MCF 10A (cell line): ENCODE measurements at regions of chr12 and their contacts with region 1.

Region 1: DNA sequence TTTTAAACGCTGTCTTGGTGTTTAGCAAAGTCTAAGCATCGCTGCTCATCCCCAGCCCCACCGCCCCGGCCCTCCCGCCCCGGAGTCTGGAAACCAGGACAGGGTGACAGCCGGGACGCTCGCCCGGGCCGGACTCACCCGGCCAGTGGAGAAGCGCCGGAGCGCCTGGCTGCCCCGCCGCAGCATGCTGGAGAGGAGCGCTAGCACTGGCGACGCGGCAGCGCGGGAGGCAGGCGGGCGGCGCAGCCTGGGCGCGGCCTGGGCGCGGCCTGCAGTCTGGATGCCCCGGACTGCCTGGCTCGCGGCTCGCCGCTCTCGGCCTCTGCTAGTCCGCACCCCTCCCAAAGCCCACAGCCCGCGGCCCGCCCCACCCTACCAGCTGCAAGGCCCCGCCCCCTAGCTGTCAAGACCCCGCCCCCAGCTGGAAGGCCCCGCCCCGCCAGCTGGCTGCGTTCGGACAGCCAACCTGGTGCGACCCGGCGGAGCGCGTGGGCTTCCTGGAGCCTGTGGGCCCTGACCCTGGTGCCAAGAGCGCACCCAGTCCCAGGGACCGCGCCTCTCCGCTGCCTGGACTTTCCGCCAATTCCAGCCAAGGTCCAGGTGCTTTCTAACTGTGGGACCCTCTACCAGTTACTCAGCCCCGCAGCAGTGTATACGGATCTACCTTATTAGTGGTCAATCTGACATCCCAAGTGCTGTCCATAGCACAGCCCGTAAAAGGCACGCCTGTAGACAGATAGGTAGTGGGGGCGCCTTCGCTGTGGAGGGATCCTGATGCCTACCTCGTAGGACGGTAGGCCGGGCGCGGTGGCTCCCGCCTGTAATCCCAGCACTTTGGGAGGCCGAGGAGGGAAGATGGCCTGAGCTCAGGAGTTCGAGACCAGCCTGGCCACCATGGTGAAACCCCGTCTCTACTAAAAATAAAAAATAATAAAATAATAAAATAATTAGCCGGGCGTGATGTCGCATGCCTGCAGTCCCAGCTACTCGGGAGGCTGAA is at the start of gene ALDH1L2:
- DNase-seq: peak; percentile 85
- H3K4me3 Mint-ChIP-seq: peak within 1 kb of the TSS; percentile 92
- H3K27ac Mint-ChIP-seq: peak within 1 kb of the TSS; percentile 97
- H3K4me1 Mint-ChIP-seq: peaks cover 23% of the 10 kb centered on the region
- H3K27me3 Mint-ChIP-seq: no peaks in the 10 kb centered on the region
- CTCF ChIP-seq: no peak
- total RNA-seq, gene ALDH1L2: 165 TPM in 2 replicates

Region 2: DNA sequence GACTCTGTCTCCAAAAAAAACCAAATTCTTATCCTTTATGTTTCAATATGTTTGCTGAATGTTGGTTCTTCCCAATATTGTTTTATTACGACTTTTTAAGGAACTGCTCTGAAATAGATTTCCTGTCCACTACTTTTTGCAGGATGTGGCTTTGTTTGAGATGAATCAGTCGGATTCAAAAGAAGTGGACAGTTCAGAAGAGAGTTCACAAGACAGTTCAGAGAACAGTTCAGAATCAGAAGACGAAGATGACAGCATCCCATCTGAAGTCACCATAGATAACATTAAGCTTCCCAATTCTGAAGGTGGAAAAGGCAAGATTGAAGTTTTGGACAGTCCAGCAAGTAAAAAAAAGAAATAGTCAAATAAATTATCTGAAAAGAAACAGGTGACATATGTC is 90.2 kb before region 1 on chr12:
- CTCF ChIA-PET with region 1: no interaction called
- POLR2A ChIA-PET with region 1: no interaction called
- intact Hi-C with region 1: no loop called
- DNase-seq: no peak
- H3K4me3 Mint-ChIP-seq: no peak overlapping the region
- H3K27ac Mint-ChIP-seq: no peak overlapping the region
- H3K4me1 Mint-ChIP-seq: peaks cover 27% of the 10 kb centered on the region
- H3K27me3 Mint-ChIP-seq: no peaks in the 10 kb centered on the region
- CTCF ChIP-seq: no peak

Region 3: GRCh38 chr12:105069936-105070702 is 14.4 kb before region 1 on chr12:
- CTCF ChIA-PET with region 1: interaction called, 7 read pairs
- POLR2A ChIA-PET with region 1: interaction called, 21 read pairs
- intact Hi-C with region 1: no loop called
- DNase-seq: no peak
- H3K4me3 Mint-ChIP-seq: no peak overlapping the region
- H3K27ac Mint-ChIP-seq: no peak overlapping the region
- H3K4me1 Mint-ChIP-seq: no peaks in the 10 kb centered on the region
- H3K27me3 Mint-ChIP-seq: no peaks in the 10 kb centered on the region
- CTCF ChIP-seq: no peak

Region 4: DNA sequence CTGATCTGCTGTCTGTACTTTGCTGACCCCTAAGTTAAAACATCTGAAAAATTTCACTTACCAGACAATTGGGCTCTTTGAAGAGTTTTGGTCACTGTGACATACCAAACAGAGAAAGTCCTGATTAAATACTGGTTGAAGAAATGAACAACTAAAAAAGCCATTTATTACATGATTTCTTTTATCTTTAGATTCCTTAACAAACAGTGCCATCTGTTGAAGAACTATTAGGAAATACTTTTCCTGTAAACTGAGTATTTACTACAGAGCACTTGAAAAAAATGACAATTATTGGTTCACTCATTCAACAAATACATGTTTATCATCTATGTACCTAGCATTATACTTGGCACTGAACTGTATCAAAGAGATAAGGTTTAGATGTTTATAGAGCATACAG is 16.4 kb after region 1 on chr12:
- CTCF ChIA-PET with region 1: interaction called, 6 read pairs
- POLR2A ChIA-PET with region 1: interaction called, 94 read pairs
- intact Hi-C with region 1: loop called (anchors 2 kb)
- DNase-seq: no peak
- H3K4me3 Mint-ChIP-seq: no peak overlapping the region
- H3K27ac Mint-ChIP-seq: peak overlapping the region; percentile 85
- H3K4me1 Mint-ChIP-seq: peaks cover 12% of the 10 kb centered on the region
- H3K27me3 Mint-ChIP-seq: no peaks in the 10 kb centered on the region
- CTCF ChIP-seq: peak; percentile 24

Region 5: GRCh38 chr12:105175397-105175990 is 90.9 kb after region 1 on chr12:
- CTCF ChIA-PET with region 1: no interaction called
- POLR2A ChIA-PET with region 1: no interaction called
- intact Hi-C with region 1: no loop called
- DNase-seq: no peak
- H3K4me3 Mint-ChIP-seq: no peak overlapping the region
- H3K27ac Mint-ChIP-seq: no peak overlapping the region
- H3K4me1 Mint-ChIP-seq: no peaks in the 10 kb centered on the region
- H3K27me3 Mint-ChIP-seq: no peaks in the 10 kb centered on the region
- CTCF ChIP-seq: no peak